Activated CD8-positive, alpha-beta T cell treated with anti-CD3 and anti-CD28 coated beads, Interleukin-2, amount 10 ng/mL, durations not matched to agents 7 days and 5 days (primary cell): ENCODE measurements at regions of chr22 and their contacts with region 1.

Region 1: DNA sequence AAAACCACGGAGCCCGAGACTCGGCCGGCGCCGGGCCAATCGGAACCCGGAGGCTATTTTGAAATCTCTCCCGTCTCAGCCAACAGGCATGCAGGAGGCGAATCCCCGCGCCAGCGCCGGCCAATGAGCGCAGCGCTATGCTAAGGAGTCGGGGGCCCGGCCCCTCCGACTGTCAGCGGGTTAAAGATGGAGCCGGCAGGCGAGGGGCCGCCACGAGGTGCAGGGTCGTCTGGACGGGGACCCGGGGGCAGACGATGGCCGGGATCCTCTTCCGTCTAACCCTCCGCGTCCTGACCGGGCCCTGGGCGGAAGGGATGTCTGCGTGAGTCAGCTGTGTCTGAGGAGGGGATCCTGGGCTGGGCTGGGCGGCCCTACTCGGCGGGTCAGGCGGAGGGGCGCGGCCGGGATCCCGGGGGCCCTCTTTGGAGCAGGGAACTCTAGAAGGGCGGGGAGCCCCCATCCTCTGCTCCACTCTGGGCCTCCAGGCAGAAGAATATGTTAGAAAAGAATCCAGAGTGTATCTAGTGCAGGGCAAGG is 10.0 kb downstream of the SDF2L1 start:
- DNase-seq: peak; percentile 93
- ATAC-seq: peak; percentile 99
- H3K4me3 Mint-ChIP-seq: peak overlapping the region; percentile 94
- H3K27ac Mint-ChIP-seq: peak overlapping the region; percentile 87
- H3K4me1 Mint-ChIP-seq: peaks cover 38% of the 10 kb centered on the region
- H3K27me3 Mint-ChIP-seq: no peaks in the 10 kb centered on the region

Region 2: GRCh38 chr22:21666786-21667185 is 14.7 kb after region 1 on chr22:
- CTCF ChIA-PET with region 1: interaction called, 7 read pairs
- POLR2A ChIA-PET with region 1: interaction called, 12 read pairs
- DNase-seq: no peak
- ATAC-seq: no peak
- H3K4me3 Mint-ChIP-seq: peak overlapping the region; percentile 100
- H3K27ac Mint-ChIP-seq: peak overlapping the region; percentile 58
- H3K4me1 Mint-ChIP-seq: peaks cover 28% of the 10 kb centered on the region
- H3K27me3 Mint-ChIP-seq: no peaks in the 10 kb centered on the region